CD14-positive monocyte (primary cell): ENCODE measurements at regions of chr4 and their contacts with region 1.

Region 1: DNA sequence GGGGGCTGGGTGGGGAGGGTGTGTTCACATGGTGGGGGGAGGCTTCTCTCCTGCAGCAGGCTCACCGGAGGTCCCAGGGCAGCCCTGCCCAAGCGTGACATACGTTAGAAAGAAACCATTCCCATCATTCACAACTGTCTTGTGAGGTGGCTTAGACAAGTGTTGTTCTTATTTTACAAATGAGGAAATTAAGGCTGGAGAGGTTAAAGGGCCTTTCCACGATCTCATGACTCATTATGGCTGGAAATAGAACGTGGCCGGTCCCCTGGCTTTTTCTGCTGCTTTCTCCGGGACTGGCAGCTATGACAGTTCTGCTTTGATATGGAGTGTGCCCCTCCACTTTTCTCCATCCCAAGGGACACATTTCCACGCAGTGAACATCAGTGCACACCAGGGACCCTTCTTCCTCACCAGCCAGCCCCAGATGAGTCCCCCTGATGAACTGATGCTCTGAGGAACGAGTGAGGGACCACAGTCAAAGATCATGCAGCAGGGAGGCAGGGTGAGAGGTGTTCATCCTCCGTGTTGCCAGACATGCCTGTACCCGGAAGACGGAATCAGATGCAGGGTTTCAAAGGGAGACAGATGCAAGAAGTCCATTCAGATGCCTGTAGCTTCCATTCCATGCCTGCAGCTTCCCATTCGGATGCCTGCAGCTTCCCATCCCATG is 64.0 kb upstream of the ACSL1 start:
- DNase-seq: peak; percentile 77 to 94 (median 90)
- H3K4me3 ChIP-seq: peak overlapping the region in 1 of 3 experiments; percentile 48
- H3K4me3 Mint-ChIP-seq: peak overlapping the region; percentile 66 to 76
- H3K27ac ChIP-seq: peak overlapping the region; percentile 71 to 80
- H3K27ac Mint-ChIP-seq: peak overlapping the region; percentile 85 to 99 (median 93)
- H3K4me1 ChIP-seq: peaks cover 39 to 44% of the 10 kb centered on the region in 2 donors
- H3K4me1 Mint-ChIP-seq: peaks cover 46% of the 10 kb centered on the region
- H3K27me3 ChIP-seq: no peaks in the 10 kb centered on the region
- H3K27me3 Mint-ChIP-seq: peaks cover 0 to 4% (median 3%) of the 10 kb centered on the region in 3 donors
- CTCF ChIP-seq: no peak

Region 2: GRCh38 chr4:184860018-184860779 is 29.6 kb before region 1 on chr4:
- intact Hi-C with region 1: loop called in 1 of 2 experiments (anchors 2 kb)
- DNase-seq: peak; percentile 77 to 89 (median 78)
- H3K4me3 ChIP-seq: peak overlapping the region in 1 of 3 experiments; percentile 55
- H3K4me3 Mint-ChIP-seq: peak overlapping the region; percentile 44 to 75
- H3K27ac ChIP-seq: peak overlapping the region; percentile 80 to 95
- H3K27ac Mint-ChIP-seq: peak overlapping the region; percentile 95 to 99 (median 97)
- H3K4me1 ChIP-seq: peaks cover 62 to 69% of the 10 kb centered on the region in 2 donors
- H3K4me1 Mint-ChIP-seq: peaks cover 62% of the 10 kb centered on the region
- H3K27me3 ChIP-seq: no peaks in the 10 kb centered on the region
- H3K27me3 Mint-ChIP-seq: peaks cover 0 to 2% (median 0%) of the 10 kb centered on the region in 3 donors
- CTCF ChIP-seq: no peak